ENCODE measurements at regions of chr11 and their contacts with region 1.

Region 1: DNA sequence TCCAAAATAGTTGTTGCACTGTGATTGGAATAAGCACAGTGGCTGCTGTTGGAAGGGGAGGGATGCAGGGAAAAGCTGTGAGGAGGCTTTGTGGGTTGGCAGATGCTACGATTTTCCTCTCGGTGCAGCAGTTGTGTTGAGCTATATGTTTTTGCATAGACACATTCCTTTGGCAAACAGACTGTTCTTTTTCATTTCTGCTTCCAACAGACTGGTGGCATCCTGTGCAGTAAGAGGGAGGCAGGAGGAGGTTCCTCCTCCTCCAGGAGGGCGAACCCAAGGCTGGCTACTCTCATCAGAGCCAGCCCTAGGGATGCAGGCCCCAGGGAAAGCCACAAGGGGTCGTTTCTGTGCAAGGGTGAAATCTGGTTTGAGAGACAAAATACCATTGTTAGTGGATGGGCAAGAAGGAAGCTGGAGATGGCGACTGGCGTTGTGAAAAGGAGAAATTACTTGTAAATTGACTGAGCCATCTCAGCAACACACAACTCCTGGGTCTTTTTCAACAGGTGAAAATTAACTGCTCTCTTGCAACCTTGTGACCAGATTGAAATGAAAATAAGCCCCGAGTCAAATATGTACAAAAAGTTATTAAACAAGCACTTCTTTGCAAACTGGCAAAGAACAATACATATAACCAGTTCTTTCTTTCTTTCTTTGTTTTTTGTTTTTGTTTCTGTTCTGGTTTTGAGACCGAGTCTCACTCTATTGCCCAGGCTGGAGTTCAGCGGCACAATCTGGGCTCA is 26.5 kb upstream of the UBASH3B start:
- DNase-seq: peak; percentile 56 to 82 (median 77)
- ATAC-seq: peak; percentile 75 to 80
- H3K4me3 ChIP-seq: no peak overlapping the region
- H3K27ac ChIP-seq: no peak overlapping the region
- H3K4me1 ChIP-seq: no peaks in the 10 kb centered on the region
- H3K27me3 ChIP-seq: no peaks in the 10 kb centered on the region

Region 2: DNA sequence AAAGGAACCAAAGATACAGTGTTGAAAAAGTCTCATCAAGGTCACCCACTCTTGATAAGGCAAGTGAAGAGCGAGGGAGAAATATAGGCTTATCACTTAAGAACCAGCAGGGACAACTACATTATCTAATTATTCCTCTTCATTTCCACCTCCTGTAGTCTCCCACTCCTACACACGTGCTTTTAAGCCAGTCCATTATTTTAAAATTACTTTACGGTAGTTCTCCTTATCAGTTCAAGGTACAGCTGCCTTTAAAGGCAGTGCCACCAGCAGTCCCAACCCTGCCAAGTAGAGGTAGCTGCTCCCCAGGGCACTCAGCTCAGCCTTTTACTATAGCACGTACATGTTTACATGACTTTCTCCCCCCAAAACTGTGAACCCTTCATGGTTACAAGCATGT is 351.5 kb before region 1 on chr11:
- intact Hi-C with region 1: no loop called
- DNase-seq: no peak
- ATAC-seq: no peak
- H3K4me3 ChIP-seq: no peak overlapping the region
- H3K27ac ChIP-seq: no peak overlapping the region
- H3K4me1 ChIP-seq: peaks cover 3% of the 10 kb centered on the region
- H3K27me3 ChIP-seq: no peaks in the 10 kb centered on the region

Region 3: GRCh38 chr11:122655527-122656072 is 26.6 kb after region 1 on chr11 and contains the start of gene UBASH3B:
- intact Hi-C with region 1: no loop called
- DNase-seq: peak; percentile 80 to 91 (median 87)
- ATAC-seq: peak; percentile 93 to 94
- H3K4me3 ChIP-seq: peak within 1 kb of the TSS; percentile 31
- H3K27ac ChIP-seq: peak within 1 kb of the TSS; percentile 16
- H3K4me1 ChIP-seq: peaks cover 4% of the 10 kb centered on the region
- H3K27me3 ChIP-seq: no peaks in the 10 kb centered on the region
- total RNA-seq, gene UBASH3B: 1.5 to 2.5 (median 1.6) TPM

Region 4: DNA sequence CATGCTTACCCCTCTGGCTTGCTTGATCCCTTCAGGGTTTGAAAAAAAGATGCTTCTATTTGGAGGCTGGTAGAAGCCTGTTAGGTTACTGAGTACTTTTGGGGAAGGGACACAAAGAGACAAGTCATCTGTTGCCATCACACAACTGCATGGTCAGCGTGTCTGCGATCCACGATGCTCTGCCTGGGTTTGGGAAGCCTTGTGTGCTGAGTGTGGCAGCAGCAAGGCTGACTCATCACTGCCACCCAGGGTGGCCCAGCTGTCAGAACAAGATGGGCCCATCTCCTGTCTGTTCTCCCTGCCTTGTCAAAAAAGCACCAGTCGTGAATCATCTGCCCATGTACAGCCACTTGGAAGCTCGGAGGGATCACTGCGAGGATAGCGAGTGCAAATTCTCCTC is 52.8 kb after region 1 on chr11:
- intact Hi-C with region 1: no loop called
- DNase-seq: no peak
- ATAC-seq: peak in 1 of 2 donors; percentile 29
- H3K4me3 ChIP-seq: no peak overlapping the region
- H3K27ac ChIP-seq: no peak overlapping the region
- H3K4me1 ChIP-seq: no peaks in the 10 kb centered on the region
- H3K27me3 ChIP-seq: no peaks in the 10 kb centered on the region

Region 5: GRCh38 chr11:122853971-122854446 is 225.0 kb after region 1 on chr11:
- intact Hi-C with region 1: loop called in 3 of 4 experiments (anchors 5 kb)
- DNase-seq: no peak
- ATAC-seq: no peak
- H3K4me3 ChIP-seq: no peak overlapping the region
- H3K27ac ChIP-seq: no peak overlapping the region
- H3K4me1 ChIP-seq: no peaks in the 10 kb centered on the region
- H3K27me3 ChIP-seq: peaks cover under 1% of the 10 kb centered on the region